HEK293 (cell line): ENCODE measurements at regions of chr17 and their contacts with region 1.

Region 1: GRCh38 chr17:4249452-4250029 is 14.2 kb downstream of the ANKFY1 start:
- H3K4me3 ChIP-seq: no peak overlapping the region
- H3K27ac ChIP-seq: no peak overlapping the region
- H3K4me1 ChIP-seq: peaks cover 22% of the 10 kb centered on the region
- CTCF ChIP-seq: peak; percentile 14; the same call in 1 of the 2 replicates

Region 2: DNA sequence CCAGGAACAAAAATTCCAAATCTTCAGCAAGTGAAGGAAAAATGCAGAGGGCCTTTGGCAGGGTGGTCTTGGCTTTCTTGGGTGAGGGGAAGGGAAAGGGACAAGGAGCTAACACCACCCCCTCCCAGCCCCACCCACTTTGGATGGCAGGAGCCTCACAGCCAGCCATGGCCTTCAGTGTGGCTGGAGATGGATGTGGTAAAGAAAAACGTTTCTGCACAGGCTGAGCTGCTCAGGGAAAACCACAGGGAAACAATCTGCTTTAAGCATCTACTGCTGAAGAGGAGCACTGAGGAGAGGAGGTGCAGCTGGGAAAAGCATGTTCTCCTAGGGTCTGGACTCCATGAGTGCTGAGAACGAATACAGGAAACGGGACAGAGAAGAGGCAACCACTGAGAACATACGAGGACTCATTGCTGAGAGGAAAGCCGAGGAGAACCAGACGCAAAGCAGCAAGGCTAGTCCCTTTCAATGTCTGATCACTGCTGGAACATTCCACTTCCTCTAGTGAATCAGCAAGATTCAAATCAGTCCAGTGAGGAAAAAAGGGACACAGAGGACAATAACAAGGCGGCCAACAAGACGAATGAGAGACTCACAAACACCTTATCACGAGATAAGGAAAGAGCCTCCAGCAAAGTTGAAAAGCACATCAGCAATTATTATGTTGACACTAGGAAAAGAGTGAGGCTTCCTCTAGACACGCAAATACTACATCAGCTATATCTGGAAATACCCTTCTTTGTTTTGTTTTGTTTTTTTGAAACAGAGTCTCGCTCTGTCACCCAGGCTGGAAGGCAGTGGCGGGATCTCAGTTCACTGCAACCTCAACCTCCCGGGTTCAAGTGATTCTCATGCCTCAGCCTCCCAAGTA is 148.4 kb before region 1 on chr17:
- CTCF ChIA-PET with region 1: no interaction called
- POLR2A ChIA-PET with region 1: no interaction called
- H3K4me3 ChIP-seq: no peak overlapping the region
- H3K27ac ChIP-seq: peak overlapping the region; percentile 46; the same call in 1 of the 2 replicates
- H3K4me1 ChIP-seq: no peaks in the 10 kb centered on the region
- CTCF ChIP-seq: no peak

Region 3: DNA sequence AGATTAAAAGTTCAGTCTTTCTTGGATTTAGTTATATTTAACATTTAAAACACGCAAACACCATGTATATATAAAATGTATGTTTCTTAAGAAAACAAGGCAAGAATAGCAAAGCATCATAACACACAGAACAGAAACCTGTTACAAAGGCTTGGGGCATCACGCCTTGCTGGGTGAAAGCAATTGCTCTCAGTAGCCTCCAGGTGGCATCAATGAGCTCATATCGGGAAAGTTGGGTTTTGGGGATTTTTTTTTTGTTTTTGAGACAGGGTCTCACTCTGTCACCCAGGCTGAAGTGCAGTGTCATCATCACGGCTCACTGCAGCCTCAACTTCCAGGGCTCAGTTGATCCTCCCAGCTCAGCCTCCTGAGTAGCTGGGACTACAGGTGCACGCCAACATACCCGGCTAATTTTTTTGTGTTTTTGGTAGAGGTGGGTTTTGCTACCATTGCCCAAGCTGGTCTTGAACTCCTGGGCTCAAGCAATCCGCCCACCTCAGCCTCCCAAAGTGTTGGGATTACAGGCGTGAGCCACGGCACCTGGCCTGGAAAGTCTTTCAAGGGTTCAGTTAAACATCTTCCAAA is 49.6 kb before region 1 on chr17:
- CTCF ChIA-PET with region 1: interaction called, 13 read pairs
- POLR2A ChIA-PET with region 1: no interaction called
- H3K4me3 ChIP-seq: no peak overlapping the region
- H3K27ac ChIP-seq: no peak overlapping the region
- H3K4me1 ChIP-seq: no peaks in the 10 kb centered on the region
- CTCF ChIP-seq: peak; percentile 74

Region 4: DNA sequence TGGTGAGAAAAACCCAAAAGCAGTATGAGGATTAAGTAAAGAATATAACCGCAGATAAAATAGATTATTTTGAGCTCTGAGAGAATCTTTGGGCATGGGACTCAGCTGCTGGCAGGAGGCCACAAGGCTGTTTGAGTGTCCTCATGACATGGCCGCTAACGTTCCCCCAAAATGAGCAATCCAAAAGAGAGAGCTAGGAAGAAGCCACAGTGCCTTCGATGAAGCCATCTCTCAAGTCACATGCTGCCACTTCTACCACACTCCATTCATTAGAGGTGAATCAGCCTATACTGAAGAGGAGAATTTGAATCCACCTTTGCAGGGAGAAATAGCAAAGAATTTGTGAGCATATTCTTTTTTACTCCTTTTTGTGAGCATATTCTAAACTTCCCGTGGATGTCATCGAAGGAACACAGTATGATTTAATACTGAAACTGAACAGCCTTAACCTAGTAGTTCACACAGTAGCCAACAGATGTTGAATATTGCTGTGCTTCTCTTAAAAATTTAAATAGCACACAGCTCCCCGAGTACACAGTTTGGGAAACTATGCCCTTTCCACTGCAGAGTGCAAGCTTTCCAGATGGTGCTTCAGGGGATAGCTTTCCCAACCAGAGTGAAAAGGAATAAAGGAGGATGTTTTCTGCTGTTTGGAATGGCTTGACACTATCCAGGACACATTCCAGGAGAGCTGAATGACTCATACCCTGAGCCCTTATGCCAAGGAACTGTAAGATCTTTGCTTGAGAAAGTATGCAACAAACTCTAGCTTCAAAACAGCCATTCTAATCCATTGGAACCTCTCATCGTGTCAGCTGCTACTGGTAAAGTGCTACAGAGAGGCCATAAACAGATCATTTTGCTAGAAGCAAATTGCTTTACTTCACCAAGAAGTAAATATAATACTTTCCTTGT is 19.7 kb before region 1 on chr17:
- CTCF ChIA-PET with region 1: interaction called, 11 read pairs
- POLR2A ChIA-PET with region 1: interaction called, 4 read pairs
- H3K4me3 ChIP-seq: no peak overlapping the region
- H3K27ac ChIP-seq: peak overlapping the region; percentile 33; the same call in 1 of the 2 replicates
- H3K4me1 ChIP-seq: peaks cover 5% of the 10 kb centered on the region; the same call in 1 of the 2 replicates
- CTCF ChIP-seq: no peak

Region 5: DNA sequence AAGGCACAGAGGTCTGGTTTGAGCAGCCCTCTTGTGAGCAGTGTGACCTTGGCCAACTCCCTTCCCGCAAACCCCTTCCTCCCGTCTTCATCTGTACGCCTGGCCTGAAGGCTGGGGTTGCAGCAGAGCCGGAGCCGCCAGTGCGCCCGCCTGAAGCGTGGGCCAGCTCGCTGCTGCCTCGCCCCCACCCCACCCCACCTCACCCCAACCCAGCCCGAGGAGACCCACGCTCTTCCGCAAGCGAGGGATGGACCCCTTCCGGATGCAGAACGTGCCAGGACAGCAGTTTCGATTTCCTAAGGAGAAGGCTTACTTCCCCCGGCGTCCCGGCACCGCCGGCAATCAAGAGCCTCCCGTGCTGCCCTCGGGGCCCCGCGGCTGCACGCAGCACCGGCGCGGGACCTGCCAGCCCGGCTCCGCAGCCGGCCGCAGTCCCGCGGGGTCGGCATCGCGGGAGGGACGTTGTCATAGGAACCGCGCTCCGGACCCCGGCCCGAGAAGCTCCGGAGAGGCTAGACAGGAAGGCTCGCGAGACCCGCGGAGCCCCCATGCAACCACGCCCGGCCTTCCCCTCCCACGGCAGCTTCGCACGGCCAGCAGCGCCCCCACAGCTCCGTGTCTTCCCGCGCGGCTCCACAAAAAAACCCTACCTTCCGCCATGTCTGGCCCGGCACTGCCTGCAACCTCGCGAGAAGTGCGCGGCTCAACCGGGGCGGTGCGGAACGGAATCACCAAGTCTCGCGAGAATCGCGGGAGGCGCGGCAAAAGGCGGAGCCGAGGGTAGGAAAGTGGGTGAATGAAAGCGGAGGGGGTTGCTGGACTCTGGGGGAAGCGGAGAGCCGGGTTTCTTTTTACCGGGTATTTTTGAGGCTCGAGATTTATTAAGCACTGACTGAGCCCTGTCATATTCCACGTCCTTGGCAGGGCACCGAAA is 14.0 kb after region 1 on chr17 and contains the start of gene ANKFY1:
- CTCF ChIA-PET with region 1: interaction called, 76 read pairs
- POLR2A ChIA-PET with region 1: interaction called, 5 read pairs
- H3K4me3 ChIP-seq: peak within 1 kb of the TSS; percentile 94
- H3K27ac ChIP-seq: peak within 1 kb of the TSS; percentile 89
- H3K4me1 ChIP-seq: peaks cover 4% of the 10 kb centered on the region; the same call in 1 of the 2 replicates
- CTCF ChIP-seq: peak; percentile 96

Region 6: DNA sequence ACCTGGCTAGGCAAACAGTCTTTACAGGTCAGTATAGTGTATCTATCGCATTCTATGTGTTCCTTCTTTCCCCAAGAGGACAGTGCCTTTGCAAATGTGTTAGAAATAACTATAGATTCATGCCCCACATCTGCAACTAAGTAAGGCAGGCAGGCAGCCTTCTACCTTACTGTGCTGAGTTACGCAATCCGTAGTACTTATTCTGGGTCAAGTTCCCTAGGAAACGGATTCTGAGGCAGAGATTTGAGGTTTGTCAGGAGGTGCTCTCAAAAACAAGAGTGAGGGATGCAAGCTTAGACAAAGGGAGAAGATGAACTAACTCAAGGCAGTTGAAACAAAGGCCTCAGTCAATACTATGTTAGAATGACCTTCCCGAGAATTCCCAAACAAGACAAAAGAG is 27.0 kb after region 1 on chr17:
- CTCF ChIA-PET with region 1: no interaction called
- POLR2A ChIA-PET with region 1: no interaction called
- H3K4me3 ChIP-seq: no peak overlapping the region
- H3K27ac ChIP-seq: no peak overlapping the region
- H3K4me1 ChIP-seq: no peaks in the 10 kb centered on the region
- CTCF ChIP-seq: no peak